ENCODE measurements at regions of chr1 and their contacts with region 1.

Region 1: GRCh38 chr1:223748773-223749733 is 36.7 kb downstream of the CAPN2 start:
- DNase-seq: no peak
- ATAC-seq: peak; percentile 76
- H3K4me3 ChIP-seq: peak overlapping the region; percentile 3 to 14; a peak in 2 of 4 replicates
- H3K27ac ChIP-seq: peak overlapping the region; percentile 62; the same call in 1 of the 2 replicates
- H3K4me1 ChIP-seq: peaks cover 14% of the 10 kb centered on the region
- H3K27me3 ChIP-seq: no peaks in the 10 kb centered on the region
- CTCF ChIP-seq: peak; percentile 99

Region 2: DNA sequence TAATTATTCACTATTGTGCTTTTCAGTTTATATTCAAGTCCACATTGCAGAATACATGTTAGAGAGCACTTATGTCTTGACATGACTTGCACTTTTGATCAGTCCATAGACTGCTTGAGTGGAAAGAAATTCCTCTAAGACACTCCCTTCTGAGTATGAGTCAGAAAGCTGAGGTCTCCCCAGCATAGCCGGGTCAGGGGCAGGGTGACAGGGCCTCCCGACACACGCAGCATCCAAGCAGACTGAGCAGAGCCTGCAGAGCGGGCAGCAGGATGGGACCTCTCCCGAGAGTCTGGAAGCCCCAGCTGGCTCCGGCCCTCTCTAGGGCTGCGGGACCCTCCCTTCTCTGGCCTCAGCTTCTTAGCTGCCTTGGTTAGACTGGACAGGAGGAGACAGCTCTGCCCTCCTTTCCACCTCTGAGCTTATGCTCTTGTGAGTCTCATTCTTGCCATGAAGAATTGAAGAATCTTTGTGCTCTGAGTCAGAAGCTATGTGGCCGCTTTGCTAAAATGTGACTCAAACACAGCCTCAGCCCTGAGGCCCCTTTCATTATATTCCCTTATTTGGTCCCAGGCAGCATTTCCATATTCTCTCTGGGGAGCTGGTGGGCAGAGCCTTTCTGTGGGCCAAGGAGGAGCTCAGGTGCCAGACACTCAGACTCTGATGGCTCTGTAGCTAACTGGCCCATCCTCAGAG is 48.0 kb before region 1 on chr1:
- CTCF ChIA-PET with region 1: interaction called, 7 read pairs
- POLR2A ChIA-PET with region 1: no interaction called
- in situ Hi-C with region 1: no loop called
- intact Hi-C with region 1: loop called (anchors 1 kb)
- DNase-seq: peak; percentile 97
- ATAC-seq: peak; percentile 85
- H3K4me3 ChIP-seq: peak overlapping the region in 1 of 2 experiments; percentile 36; a peak in 2 of 4 replicates
- H3K27ac ChIP-seq: peak overlapping the region; percentile 90
- H3K4me1 ChIP-seq: peaks cover 51% of the 10 kb centered on the region
- H3K27me3 ChIP-seq: no peaks in the 10 kb centered on the region
- CTCF ChIP-seq: no peak

Region 3: GRCh38 chr1:223712194-223712849 is 36.7 kb before region 1 on chr1 and contains the start of gene CAPN2:
- CTCF ChIA-PET with region 1: interaction called, 5 read pairs
- POLR2A ChIA-PET with region 1: no interaction called
- in situ Hi-C with region 1: no loop called
- intact Hi-C with region 1: loop called (anchors 5 kb)
- DNase-seq: no peak
- ATAC-seq: peak; percentile 81
- H3K4me3 ChIP-seq: peak within 1 kb of the TSS; percentile 74 to 93
- H3K27ac ChIP-seq: peak within 1 kb of the TSS; percentile 96
- H3K4me1 ChIP-seq: peaks cover 66% of the 10 kb centered on the region
- H3K27me3 ChIP-seq: no peaks in the 10 kb centered on the region
- CTCF ChIP-seq: peak; percentile 85
- total RNA-seq, gene CAPN2: 171 TPM

Measured in Panc1 (cell line).